OCI-LY7 (cell line): ENCODE measurements at regions of chr3 and their contacts with region 1.

Region 1: DNA sequence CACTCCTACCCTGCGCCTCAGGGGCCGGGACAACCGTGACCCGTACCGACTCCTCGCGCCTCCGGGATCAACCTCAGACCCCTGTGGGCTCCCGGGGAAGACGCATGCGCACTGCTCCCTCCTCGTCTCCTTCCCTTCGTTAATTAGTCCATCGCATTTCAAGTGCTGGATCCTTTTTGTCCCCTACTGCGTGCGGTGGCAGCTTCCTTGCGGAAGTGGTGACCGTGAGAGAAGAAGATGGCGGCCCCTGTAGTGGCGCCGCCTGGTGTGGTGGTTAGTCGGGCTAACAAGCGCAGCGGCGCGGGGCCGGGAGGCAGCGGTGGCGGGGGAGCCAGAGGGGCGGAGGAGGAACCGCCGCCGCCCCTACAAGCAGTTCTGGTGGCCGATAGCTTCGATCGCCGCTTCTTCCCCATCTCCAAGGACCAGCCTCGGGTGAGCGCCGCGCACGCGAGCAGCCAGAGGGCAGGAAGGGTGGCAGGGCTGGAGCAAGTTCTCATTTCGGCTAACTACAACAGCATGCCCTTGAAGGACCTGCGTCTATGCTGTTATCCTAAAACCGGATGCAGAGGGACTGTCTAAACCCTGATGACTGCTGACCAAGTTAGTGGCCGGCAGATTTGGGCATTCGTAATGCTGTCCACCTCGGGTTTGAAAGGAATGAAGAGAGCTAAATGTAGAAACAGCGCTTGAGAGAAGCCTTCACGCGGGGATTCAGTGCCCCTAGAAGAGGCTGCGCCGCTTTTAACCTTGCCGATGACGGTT is at the start of gene EIF2B5:
- DNase-seq: peak; percentile 92
- H3K4me3 ChIP-seq: peak within 1 kb of the TSS; percentile 97
- H3K27ac ChIP-seq: peak within 1 kb of the TSS; percentile 67
- H3K4me1 ChIP-seq: peaks cover 20% of the 10 kb centered on the region
- CTCF ChIP-seq: peak; percentile 65
- total RNA-seq, gene EIF2B5: 41.1 and 66.1 TPM in 2 replicates

Region 2: GRCh38 chr3:184154885-184155643 is 19.7 kb after region 1 on chr3 and contains the start of gene DVL3:
- CTCF ChIA-PET with region 1: no interaction called
- POLR2A ChIA-PET with region 1: interaction called, 8 read pairs
- intact Hi-C with region 1: loop called (anchors 1 kb)
- DNase-seq: peak; percentile 74
- H3K4me3 ChIP-seq: peak within 1 kb of the TSS; percentile 92
- H3K27ac ChIP-seq: peak within 1 kb of the TSS; percentile 52
- H3K4me1 ChIP-seq: peaks cover 23% of the 10 kb centered on the region
- CTCF ChIP-seq: no peak
- total RNA-seq, gene DVL3: 38.5 and 41.3 TPM in 2 replicates

Region 3: GRCh38 chr3:184185461-184186308 is 50.4 kb after region 1 on chr3 and contains the start of gene ABCF3:
- CTCF ChIA-PET with region 1: no interaction called
- POLR2A ChIA-PET with region 1: no interaction called
- intact Hi-C with region 1: loop called (anchors 2 kb)
- DNase-seq: peak; percentile 99
- H3K4me3 ChIP-seq: peak within 1 kb of the TSS; percentile 97
- H3K27ac ChIP-seq: peak within 1 kb of the TSS; percentile 43
- H3K4me1 ChIP-seq: peaks cover 16% of the 10 kb centered on the region
- CTCF ChIP-seq: no peak
- total RNA-seq, gene ABCF3: 38.9 and 51.6 TPM in 2 replicates

Region 4: DNA sequence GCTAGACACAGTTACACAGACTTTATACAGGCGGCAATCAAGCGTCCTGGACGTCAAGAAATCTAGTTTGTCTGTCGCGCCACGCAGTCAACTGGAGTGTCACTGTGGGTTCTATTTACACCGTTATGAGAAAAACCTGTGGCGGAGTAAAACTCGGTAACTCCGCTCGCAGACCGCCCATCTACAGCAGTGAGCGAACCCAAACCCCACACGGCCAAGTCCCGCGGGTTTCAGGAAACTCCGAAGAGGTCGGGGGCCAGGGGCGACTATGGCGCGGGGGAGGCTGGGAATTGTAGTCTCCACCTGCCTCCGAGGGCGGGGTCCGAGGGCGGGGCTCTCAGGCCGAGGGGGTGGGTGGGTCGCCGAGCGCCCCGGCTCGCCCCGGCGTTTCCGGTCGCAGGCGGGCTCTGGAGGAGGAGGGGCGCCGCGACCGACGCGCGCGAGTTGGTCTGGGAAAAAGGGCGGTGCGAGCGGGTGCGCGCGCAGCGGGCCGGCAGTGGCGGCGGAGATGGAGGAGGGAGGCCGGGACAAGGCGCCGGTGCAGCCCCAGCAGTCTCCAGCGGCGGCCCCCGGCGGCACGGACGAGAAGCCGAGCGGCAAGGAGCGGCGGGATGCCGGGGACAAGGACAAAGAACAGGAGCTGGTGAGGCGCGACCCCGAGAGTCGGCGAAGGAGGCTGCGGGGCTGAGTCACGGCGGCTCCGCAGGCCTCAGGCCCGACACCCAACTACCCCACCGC is 163.6 kb after region 1 on chr3 and contains the start of gene PSMD2:
- CTCF ChIA-PET with region 1: no interaction called
- POLR2A ChIA-PET with region 1: interaction called, 6 read pairs
- intact Hi-C with region 1: loop called (anchors 5 kb)
- DNase-seq: peak; percentile 97
- H3K4me3 ChIP-seq: peak within 1 kb of the TSS; percentile 96
- H3K27ac ChIP-seq: peak within 1 kb of the TSS; percentile 24
- H3K4me1 ChIP-seq: peaks cover 12% of the 10 kb centered on the region
- CTCF ChIP-seq: no peak
- total RNA-seq, gene PSMD2: 158 and 205 TPM in 2 replicates